Activated CD8-positive, alpha-beta T cell treated with anti-CD3 and anti-CD28 coated beads, Interleukin-2, amount 10 ng/mL, durations not matched to agents 7 days and 5 days (primary cell): ENCODE measurements at regions of chr16 and their contacts with region 1.

Region 1: GRCh38 chr16:28950648-28951409 is at the start of gene NFATC2IP:
- DNase-seq: peak; percentile 100
- ATAC-seq: peak; percentile 98
- H3K4me3 Mint-ChIP-seq: peak within 1 kb of the TSS; percentile 97
- H3K27ac Mint-ChIP-seq: peak within 1 kb of the TSS; percentile 98
- H3K4me1 Mint-ChIP-seq: peaks cover 32% of the 10 kb centered on the region
- H3K27me3 Mint-ChIP-seq: peaks cover 7% of the 10 kb centered on the region
- total RNA-seq, gene NFATC2IP: 113 to 120 TPM

Region 2: DNA sequence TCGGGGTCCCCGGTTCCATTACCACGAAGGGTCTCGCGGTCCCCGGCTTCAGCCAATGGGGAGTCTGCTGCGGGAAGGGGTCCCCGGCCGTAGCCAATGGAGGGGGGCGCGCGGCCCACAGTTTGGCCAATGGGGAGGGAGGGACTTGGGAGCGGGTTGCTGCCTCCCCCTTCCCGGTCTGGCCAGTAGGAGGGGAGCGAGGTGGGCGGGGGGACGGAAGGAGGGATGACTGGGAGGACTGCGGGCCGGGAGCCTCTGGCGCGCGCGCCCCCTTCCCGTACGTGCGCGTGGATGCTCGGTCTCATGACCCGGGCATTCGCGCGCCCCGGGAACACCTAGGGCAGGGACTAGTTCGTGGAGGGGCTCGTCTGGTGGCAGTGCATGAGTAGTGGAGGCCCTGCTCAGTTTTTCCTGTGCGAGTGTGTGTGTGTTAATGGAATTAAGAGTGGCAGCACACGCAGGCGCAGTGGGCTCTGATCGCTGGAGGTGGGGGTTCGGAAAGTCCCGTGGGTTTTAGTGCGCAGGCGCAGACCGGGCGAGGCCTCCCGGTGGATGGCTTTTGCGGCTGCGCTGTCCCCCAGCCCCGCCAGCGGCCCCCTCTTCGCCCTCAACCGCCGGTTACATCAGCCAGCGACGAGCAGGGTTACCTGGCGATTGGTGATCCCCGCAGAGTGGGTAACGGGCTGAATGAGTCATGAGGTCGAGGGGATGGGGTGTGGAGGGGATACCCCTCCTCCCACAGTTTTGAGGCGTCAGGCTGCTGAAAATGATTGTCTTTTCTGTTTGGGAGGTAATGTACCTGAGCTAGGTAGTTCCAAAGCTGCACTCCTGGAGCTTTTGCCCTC is 126.7 kb before region 1 on chr16:
- CTCF ChIA-PET with region 1: interaction called, 27 read pairs
- POLR2A ChIA-PET with region 1: interaction called, 6 read pairs
- DNase-seq: peak; percentile 98
- ATAC-seq: peak; percentile 76
- H3K4me3 Mint-ChIP-seq: peak overlapping the region; percentile 93
- H3K27ac Mint-ChIP-seq: peak overlapping the region; percentile 96
- H3K4me1 Mint-ChIP-seq: peaks cover 45% of the 10 kb centered on the region
- H3K27me3 Mint-ChIP-seq: no peaks in the 10 kb centered on the region

Region 3: GRCh38 chr16:28873536-28874201 is 77.2 kb before region 1 on chr16:
- CTCF ChIA-PET with region 1: interaction called, 45 read pairs
- POLR2A ChIA-PET with region 1: no interaction called
- DNase-seq: peak; percentile 71
- ATAC-seq: peak; percentile 80
- H3K4me3 Mint-ChIP-seq: no peak overlapping the region
- H3K27ac Mint-ChIP-seq: no peak overlapping the region
- H3K4me1 Mint-ChIP-seq: peaks cover 17% of the 10 kb centered on the region
- H3K27me3 Mint-ChIP-seq: no peaks in the 10 kb centered on the region

Region 4: DNA sequence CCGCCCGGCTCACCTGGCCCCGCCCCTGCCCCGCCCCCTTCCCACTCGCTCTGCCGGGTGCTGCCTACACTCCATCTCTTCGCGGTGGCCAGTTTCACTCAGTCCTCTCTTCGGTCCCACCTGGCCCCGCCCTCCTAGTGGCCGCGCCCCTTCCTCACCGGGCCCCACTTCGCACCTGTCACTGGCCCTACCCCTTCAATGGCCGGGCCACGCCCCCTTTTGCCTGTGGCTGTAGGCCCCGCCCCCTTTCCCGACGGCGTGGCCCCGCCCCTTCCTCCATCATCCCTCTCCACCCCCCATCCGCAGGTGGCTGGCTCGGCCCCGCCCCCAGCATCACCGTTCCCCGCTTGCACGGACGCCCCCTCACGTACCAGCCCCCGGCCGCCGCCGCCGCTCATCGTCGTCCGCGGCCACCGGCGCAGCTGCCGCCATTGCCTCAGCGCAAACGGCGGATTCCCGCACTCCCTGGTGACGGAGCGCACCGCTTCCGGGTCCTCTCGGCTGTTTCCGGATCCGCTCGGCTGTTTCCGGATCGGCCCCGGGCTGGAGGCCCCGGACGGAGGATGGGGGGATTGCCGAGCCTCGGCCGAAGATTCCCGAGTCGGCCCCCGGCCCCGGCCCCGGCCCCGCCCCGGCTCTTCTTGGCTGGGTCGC is 26.0 kb before region 1 on chr16 and contains the start of gene RABEP2:
- CTCF ChIA-PET with region 1: interaction called, 58 read pairs
- POLR2A ChIA-PET with region 1: interaction called, 4 read pairs
- DNase-seq: peak; percentile 97
- ATAC-seq: peak; percentile 91
- H3K4me3 Mint-ChIP-seq: peak within 1 kb of the TSS; percentile 89
- H3K27ac Mint-ChIP-seq: peak within 1 kb of the TSS; percentile 98
- H3K4me1 Mint-ChIP-seq: peaks cover 22% of the 10 kb centered on the region
- H3K27me3 Mint-ChIP-seq: no peaks in the 10 kb centered on the region
- total RNA-seq, gene RABEP2: 22.5 to 23.2 TPM

Region 5: DNA sequence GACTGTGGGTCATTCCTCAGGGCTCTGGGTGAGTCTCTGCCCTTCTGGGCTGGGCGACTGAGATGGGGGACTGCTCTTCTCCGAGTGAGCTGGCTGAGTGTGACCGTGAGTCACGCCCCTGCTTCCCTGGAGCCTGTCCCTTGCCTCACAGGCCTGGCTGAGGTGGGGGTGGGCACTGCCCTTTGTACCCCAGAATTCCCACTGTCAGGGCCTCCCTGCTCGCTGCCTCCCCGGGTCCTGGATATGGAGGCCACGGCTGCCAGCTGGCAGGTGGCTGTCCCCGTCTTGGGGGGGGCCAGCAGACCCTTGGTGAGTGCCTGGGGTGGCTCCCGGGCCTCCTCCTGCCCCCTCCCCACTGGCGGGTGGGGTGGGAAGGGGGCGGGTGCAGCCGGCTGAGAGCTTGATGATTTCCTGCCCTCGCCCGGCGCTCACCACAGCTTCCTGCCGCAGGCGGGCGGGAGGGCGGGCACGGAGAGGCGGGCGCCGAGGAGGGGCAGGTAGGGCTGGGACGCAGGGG is 33.8 kb after region 1 on chr16 and contains the start of gene LAT:
- CTCF ChIA-PET with region 1: interaction called, 9 read pairs
- POLR2A ChIA-PET with region 1: interaction called, 10 read pairs
- DNase-seq: peak; percentile 86
- ATAC-seq: peak; percentile 62
- H3K4me3 Mint-ChIP-seq: peak within 1 kb of the TSS; percentile 100
- H3K27ac Mint-ChIP-seq: peak within 1 kb of the TSS; percentile 95
- H3K4me1 Mint-ChIP-seq: peaks cover 51% of the 10 kb centered on the region
- H3K27me3 Mint-ChIP-seq: no peaks in the 10 kb centered on the region
- total RNA-seq, gene LAT: 270 to 288 TPM